GM12878 (cell line): ENCODE measurements at regions of chr1 and their contacts with region 1.

Region 1: GRCh38 chr1:209565759-209566678 is 17.5 kb upstream of the CAMK1G start:
- DNase-seq: no peak
- ATAC-seq: peak; percentile 96
- H3K4me3 ChIP-seq: no peak overlapping the region
- H3K27ac ChIP-seq: no peak overlapping the region
- H3K4me1 ChIP-seq: no peaks in the 10 kb centered on the region
- H3K27me3 ChIP-seq: peaks cover 0 to 5% of the 10 kb centered on the region in 2 experiments; a peak in 3 of 4 replicates
- CTCF ChIP-seq: peak; percentile 76 to 87 (median 82)
- EP300 ChIP-seq: no peak
- POLR2A ChIP-seq: no peak
- RAD21 ChIP-seq: peak; percentile 68

Region 2: DNA sequence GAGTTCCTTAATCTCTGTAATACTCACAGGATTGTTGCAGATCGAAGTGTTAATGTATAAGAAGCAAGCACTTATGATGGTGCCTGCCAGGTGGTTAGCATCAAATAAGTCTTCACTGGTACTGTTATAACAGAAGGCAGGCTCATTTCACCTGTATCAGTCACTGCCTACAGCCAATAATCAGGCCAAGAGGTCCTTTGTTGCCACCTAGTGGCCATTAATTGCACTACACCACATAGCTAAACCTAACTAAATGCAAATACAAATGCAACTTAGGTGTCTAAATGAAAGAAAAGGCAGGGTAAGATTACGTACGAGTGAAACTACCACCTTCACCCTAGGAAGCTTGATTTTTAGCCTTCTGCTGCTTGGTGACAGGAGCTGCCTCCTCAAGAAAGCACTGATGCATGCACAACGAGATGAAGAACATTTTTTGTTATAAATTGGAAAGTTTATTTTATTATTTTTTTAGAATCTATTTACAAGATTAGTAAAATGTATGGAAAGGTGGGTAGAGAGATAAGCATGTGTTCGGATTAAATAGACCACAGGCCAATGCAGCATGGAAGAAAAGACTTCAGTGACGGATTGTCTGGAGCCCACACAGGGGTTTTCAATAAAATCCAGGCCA is 317.3 kb before region 1 on chr1:
- CTCF ChIA-PET with region 1: interaction called, 15 read pairs
- POLR2A ChIA-PET with region 1: no interaction called
- RAD21 ChIA-PET with region 1: interaction called, 4 read pairs
- SMC1A ChIA-PET with region 1: no interaction called
- in situ Hi-C with region 1: no loop called
- intact Hi-C with region 1: no loop called
- DNase-seq: peak; percentile 30
- ATAC-seq: peak; percentile 91
- H3K4me3 ChIP-seq: no peak overlapping the region
- H3K27ac ChIP-seq: no peak overlapping the region
- H3K4me1 ChIP-seq: no peaks in the 10 kb centered on the region
- H3K27me3 ChIP-seq: no peaks in the 10 kb centered on the region; a peak in 1 of 4 replicates
- CTCF ChIP-seq: peak; percentile 81 to 93 (median 85); a peak in 5 of 6 replicates
- EP300 ChIP-seq: no peak
- POLR2A ChIP-seq: no peak
- RAD21 ChIP-seq: peak; percentile 90

Region 3: DNA sequence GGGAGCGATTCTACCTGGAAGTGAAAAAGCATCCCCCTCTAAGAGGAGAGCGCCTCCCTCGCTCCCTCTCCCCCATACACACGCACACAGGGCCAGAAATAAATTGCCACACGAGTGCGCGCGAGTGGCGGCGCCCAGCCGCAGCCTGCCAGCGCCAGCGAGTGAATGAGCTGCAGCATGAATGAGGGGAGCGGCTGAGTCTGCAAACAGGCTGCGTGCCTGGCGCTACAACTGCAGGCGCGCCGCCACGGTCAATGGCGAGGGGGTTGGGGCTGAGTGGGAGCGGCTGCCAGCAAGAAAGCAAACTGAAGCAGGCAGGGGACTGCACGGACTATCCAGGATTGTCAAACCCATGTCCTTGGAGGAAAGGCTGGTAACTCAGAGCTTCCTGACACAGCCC is 19.7 kb after region 1 on chr1:
- CTCF ChIA-PET with region 1: interaction called, 18 read pairs
- POLR2A ChIA-PET with region 1: no interaction called
- RAD21 ChIA-PET with region 1: no interaction called
- SMC1A ChIA-PET with region 1: interaction called, 3 read pairs
- in situ Hi-C with region 1: no loop called
- intact Hi-C with region 1: no loop called
- DNase-seq: no peak
- ATAC-seq: peak; percentile 22; the same call in 2 of the 3 replicates
- H3K4me3 ChIP-seq: no peak overlapping the region
- H3K27ac ChIP-seq: no peak overlapping the region
- H3K4me1 ChIP-seq: no peaks in the 10 kb centered on the region
- H3K27me3 ChIP-seq: peaks cover 8 to 12% of the 10 kb centered on the region in 2 experiments
- CTCF ChIP-seq: no peak
- EP300 ChIP-seq: no peak
- POLR2A ChIP-seq: no peak
- RAD21 ChIP-seq: no peak

Region 4: DNA sequence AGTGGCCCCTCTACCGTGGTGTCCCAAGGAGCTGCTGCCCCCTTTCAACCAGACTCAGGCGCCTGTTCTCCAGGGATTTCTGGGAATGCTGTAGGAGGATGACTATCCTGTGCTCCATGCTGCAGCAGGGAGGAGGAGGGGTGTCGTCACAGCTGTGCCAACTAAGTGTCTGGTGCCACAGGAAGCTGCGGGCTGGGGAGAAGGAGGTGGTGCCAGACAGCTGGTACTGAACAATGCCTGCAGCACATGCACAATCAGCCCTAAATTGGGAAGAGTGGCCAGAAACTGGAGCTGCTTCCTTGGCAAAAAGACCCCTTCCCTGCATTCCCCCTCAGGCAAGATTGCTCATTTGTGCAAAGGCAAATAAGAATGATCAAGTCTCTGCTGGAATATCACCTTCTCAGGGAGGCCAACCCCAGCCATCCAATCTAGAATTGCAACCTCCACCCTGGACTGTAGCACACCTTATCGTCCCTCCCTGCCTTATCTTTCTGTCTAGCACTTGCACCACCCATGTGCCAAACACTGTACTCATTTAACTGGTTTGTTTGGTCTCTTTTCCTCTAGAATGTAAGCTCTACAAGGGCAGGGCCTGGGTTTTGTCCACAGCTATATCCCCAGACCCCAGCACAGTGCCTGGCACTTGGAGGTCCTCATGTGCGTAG is 52.9 kb after region 1 on chr1:
- CTCF ChIA-PET with region 1: interaction called, 14 read pairs
- POLR2A ChIA-PET with region 1: no interaction called
- RAD21 ChIA-PET with region 1: interaction called, 6 read pairs
- SMC1A ChIA-PET with region 1: no interaction called
- in situ Hi-C with region 1: loop called (anchors 10 kb)
- intact Hi-C with region 1: no loop called
- DNase-seq: no peak
- ATAC-seq: no peak
- H3K4me3 ChIP-seq: no peak overlapping the region
- H3K27ac ChIP-seq: no peak overlapping the region
- H3K4me1 ChIP-seq: no peaks in the 10 kb centered on the region
- H3K27me3 ChIP-seq: peaks cover 0 to 4% of the 10 kb centered on the region in 2 experiments; a peak in 2 of 4 replicates
- CTCF ChIP-seq: no peak
- EP300 ChIP-seq: no peak
- POLR2A ChIP-seq: no peak
- RAD21 ChIP-seq: no peak

Region 5: GRCh38 chr1:209651148-209651547 is 85.1 kb after region 1 on chr1:
- CTCF ChIA-PET with region 1: interaction called, 11 read pairs
- POLR2A ChIA-PET with region 1: no interaction called
- RAD21 ChIA-PET with region 1: interaction called, 4 read pairs
- SMC1A ChIA-PET with region 1: interaction called, 4 read pairs
- in situ Hi-C with region 1: no loop called
- intact Hi-C with region 1: no loop called
- DNase-seq: no peak
- ATAC-seq: peak; percentile 78
- H3K4me3 ChIP-seq: no peak overlapping the region
- H3K27ac ChIP-seq: no peak overlapping the region
- H3K4me1 ChIP-seq: peaks cover 23% of the 10 kb centered on the region
- H3K27me3 ChIP-seq: no peaks in the 10 kb centered on the region
- CTCF ChIP-seq: no peak
- EP300 ChIP-seq: no peak
- POLR2A ChIP-seq: no peak
- RAD21 ChIP-seq: no peak

Region 6: GRCh38 chr1:209769171-209769904 is 203.3 kb after region 1 on chr1:
- CTCF ChIA-PET with region 1: interaction called, 15 read pairs
- POLR2A ChIA-PET with region 1: no interaction called
- RAD21 ChIA-PET with region 1: interaction called, 3 read pairs
- SMC1A ChIA-PET with region 1: interaction called, 4 read pairs
- in situ Hi-C with region 1: no loop called
- intact Hi-C with region 1: no loop called
- DNase-seq: peak; percentile 75
- ATAC-seq: peak; percentile 84
- H3K4me3 ChIP-seq: peak overlapping the region; percentile 72
- H3K27ac ChIP-seq: peak overlapping the region; percentile 93
- H3K4me1 ChIP-seq: peaks cover 52% of the 10 kb centered on the region
- H3K27me3 ChIP-seq: no peaks in the 10 kb centered on the region
- CTCF ChIP-seq: no peak
- EP300 ChIP-seq: peak; percentile 73 to 79; a peak in 3 of 4 replicates
- POLR2A ChIP-seq: no peak
- RAD21 ChIP-seq: no peak